HCT116 (cell line): ENCODE measurements at regions of chr9 and their contacts with region 1.

Region 1: GRCh38 chr9:3299872-3300271 is 225.9 kb downstream of the RFX3 start:
- DNase-seq: no peak
- ATAC-seq: no peak
- H3K4me3 ChIP-seq: no peak overlapping the region
- H3K27ac ChIP-seq: no peak overlapping the region
- H3K4me1 ChIP-seq: no peaks in the 10 kb centered on the region
- H3K27me3 ChIP-seq: no peaks in the 10 kb centered on the region
- CTCF ChIP-seq: no peak
- POLR2A ChIP-seq: no peak
- RAD21 ChIP-seq: no peak

Region 2: GRCh38 chr9:2962471-2963172 is 337.2 kb before region 1 on chr9:
- CTCF ChIA-PET with region 1: no interaction called
- POLR2A ChIA-PET with region 1: no interaction called
- RAD21 ChIA-PET with region 1: no interaction called
- intact Hi-C with region 1: no loop called
- DNase-seq: no peak
- ATAC-seq: no peak
- H3K4me3 ChIP-seq: no peak overlapping the region
- H3K27ac ChIP-seq: no peak overlapping the region
- H3K4me1 ChIP-seq: no peaks in the 10 kb centered on the region
- H3K27me3 ChIP-seq: peaks cover 67% of the 10 kb centered on the region
- CTCF ChIP-seq: no peak
- POLR2A ChIP-seq: no peak
- RAD21 ChIP-seq: no peak

Region 3: GRCh38 chr9:3099646-3100045 is 200.2 kb before region 1 on chr9:
- CTCF ChIA-PET with region 1: no interaction called
- POLR2A ChIA-PET with region 1: no interaction called
- RAD21 ChIA-PET with region 1: no interaction called
- intact Hi-C with region 1: loop called (anchors 10 kb)
- DNase-seq: no peak
- ATAC-seq: no peak
- H3K4me3 ChIP-seq: no peak overlapping the region
- H3K27ac ChIP-seq: no peak overlapping the region
- H3K4me1 ChIP-seq: no peaks in the 10 kb centered on the region
- H3K27me3 ChIP-seq: peaks cover 14% of the 10 kb centered on the region
- CTCF ChIP-seq: no peak
- POLR2A ChIP-seq: no peak
- RAD21 ChIP-seq: no peak